CD4-positive, alpha-beta memory T cell (primary cell): ENCODE measurements at regions of chr10 and their contacts with region 1.

Region 1: GRCh38 chr10:119207367-119207668 is at the start of gene GRK5:
- DNase-seq: peak; percentile 98 to 99 (median 98)
- H3K4me3 ChIP-seq: peak within 1 kb of the TSS; percentile 37 to 84
- H3K4me3 Mint-ChIP-seq: peak within 1 kb of the TSS; percentile 94 to 99 (median 96)
- H3K27ac ChIP-seq: peak within 1 kb of the TSS; percentile 84
- H3K27ac Mint-ChIP-seq: peak within 1 kb of the TSS; percentile 96 to 99 (median 97)
- H3K4me1 ChIP-seq: peaks cover 52% of the 10 kb centered on the region
- H3K4me1 Mint-ChIP-seq: peaks cover 33 to 53% (median 43%) of the 10 kb centered on the region in 4 donors
- H3K27me3 ChIP-seq: no peaks in the 10 kb centered on the region
- H3K27me3 Mint-ChIP-seq: no peaks in the 10 kb centered on the region
- total RNA-seq, gene GRK5: 26.7 to 27.9 TPM

Region 2: DNA sequence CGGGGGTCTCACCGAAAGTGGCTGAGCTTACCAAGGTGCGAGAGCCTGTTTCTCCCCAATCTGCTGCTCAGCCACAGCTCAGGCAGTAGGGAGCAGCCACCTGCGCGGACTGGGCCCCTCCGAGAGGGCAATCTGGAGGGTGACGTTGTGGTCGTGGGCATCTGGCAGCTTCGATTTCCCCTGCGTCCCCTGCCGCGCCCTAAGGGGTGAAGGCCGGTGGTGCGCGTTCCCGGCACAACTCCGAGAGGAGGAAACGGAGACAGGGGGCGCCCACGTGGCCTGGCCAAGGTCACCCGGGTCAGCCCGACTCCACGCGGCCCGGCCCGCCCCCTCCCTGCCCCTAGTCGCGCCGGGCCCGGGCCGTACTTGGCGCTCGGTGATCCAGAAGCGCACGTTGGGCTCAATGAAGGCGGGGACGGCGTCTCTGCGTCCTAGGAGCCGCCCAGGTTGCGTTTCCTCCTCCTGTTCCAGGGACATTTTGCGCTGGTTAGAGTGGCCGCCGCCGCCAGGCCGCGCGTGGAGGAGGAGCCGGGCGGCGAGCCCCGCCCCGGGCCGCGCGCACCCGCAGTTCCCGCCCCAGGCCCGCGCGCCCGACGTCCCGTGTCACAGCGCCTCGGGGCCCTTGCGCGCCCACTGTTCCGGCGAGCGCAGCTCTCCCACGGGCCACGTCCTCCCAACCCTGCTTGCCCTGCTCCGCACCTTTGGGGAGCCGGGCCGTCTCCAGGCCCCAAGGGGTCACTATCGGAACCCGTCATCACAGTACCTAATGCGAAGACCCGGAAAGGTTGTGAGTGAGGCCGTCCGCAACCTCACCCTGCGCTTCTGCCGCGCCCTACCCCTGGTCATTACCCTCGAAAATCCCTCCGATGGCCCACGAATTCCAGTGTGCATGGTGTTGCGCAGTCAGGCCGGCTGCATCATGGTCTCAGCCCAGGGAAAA is 41.9 kb before region 1 on chr10 and contains the start of gene SFXN4:
- CTCF ChIA-PET with region 1: interaction called, 8 read pairs
- POLR2A ChIA-PET with region 1: interaction called, 16 read pairs
- intact Hi-C with region 1: loop called (anchors 5 kb)
- DNase-seq: peak; percentile 76 to 87 (median 85)
- H3K4me3 ChIP-seq: peak within 1 kb of the TSS; percentile 73 to 92
- H3K4me3 Mint-ChIP-seq: peak within 1 kb of the TSS; percentile 90 to 94 (median 92)
- H3K27ac ChIP-seq: peak within 1 kb of the TSS; percentile 65
- H3K27ac Mint-ChIP-seq: peak within 1 kb of the TSS; percentile 87 to 96 (median 95)
- H3K4me1 ChIP-seq: peaks cover 20% of the 10 kb centered on the region
- H3K4me1 Mint-ChIP-seq: peaks cover 9 to 43% (median 27%) of the 10 kb centered on the region in 4 donors
- H3K27me3 ChIP-seq: no peaks in the 10 kb centered on the region
- H3K27me3 Mint-ChIP-seq: no peaks in the 10 kb centered on the region
- total RNA-seq, gene SFXN4: 17.2 to 18.5 TPM

Region 3: GRCh38 chr10:119270762-119271366 is 63.5 kb after region 1 on chr10:
- CTCF ChIA-PET with region 1: interaction called, 38 read pairs
- POLR2A ChIA-PET with region 1: interaction called, 24 read pairs
- intact Hi-C with region 1: loop called (anchors 1 kb)
- DNase-seq: peak in 3 of 5 donors; percentile 43 to 63 (median 58)
- H3K4me3 ChIP-seq: no peak overlapping the region
- H3K4me3 Mint-ChIP-seq: peak overlapping the region; percentile 45 to 80 (median 66)
- H3K27ac ChIP-seq: peak overlapping the region; percentile 93
- H3K27ac Mint-ChIP-seq: peak overlapping the region; percentile 96 to 100 (median 99)
- H3K4me1 ChIP-seq: peaks cover 69% of the 10 kb centered on the region
- H3K4me1 Mint-ChIP-seq: peaks cover 28 to 84% (median 65%) of the 10 kb centered on the region in 4 donors
- H3K27me3 ChIP-seq: no peaks in the 10 kb centered on the region
- H3K27me3 Mint-ChIP-seq: no peaks in the 10 kb centered on the region

Region 4: DNA sequence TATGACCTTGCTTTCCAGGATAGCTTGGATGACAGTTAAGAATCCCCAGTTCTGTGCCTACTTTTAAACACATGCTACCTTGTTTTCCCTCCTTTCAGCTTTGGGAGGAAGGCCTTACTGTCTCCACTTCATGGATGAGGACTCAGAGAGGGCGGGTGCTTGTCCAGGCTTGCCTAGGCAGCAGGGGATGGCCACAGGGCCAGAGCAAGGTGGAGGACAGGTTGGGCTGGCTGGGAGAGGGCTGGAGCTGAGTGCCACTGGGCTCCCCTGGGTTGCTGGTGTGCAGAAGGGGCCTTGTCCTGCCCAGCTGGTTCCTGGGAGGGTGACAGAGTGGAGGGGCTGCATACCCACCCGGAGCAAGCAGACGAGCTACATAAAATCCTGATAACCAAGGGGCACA is 117.8 kb after region 1 on chr10:
- CTCF ChIA-PET with region 1: no interaction called
- POLR2A ChIA-PET with region 1: no interaction called
- intact Hi-C with region 1: no loop called
- DNase-seq: no peak
- H3K4me3 ChIP-seq: no peak overlapping the region
- H3K4me3 Mint-ChIP-seq: no peak overlapping the region
- H3K27ac ChIP-seq: no peak overlapping the region
- H3K27ac Mint-ChIP-seq: peak overlapping the region in 1 of 7 donors; percentile 40
- H3K4me1 ChIP-seq: no peaks in the 10 kb centered on the region
- H3K4me1 Mint-ChIP-seq: peaks cover 8 to 13% (median 10%) of the 10 kb centered on the region in 4 donors
- H3K27me3 ChIP-seq: no peaks in the 10 kb centered on the region
- H3K27me3 Mint-ChIP-seq: no peaks in the 10 kb centered on the region

Region 5: DNA sequence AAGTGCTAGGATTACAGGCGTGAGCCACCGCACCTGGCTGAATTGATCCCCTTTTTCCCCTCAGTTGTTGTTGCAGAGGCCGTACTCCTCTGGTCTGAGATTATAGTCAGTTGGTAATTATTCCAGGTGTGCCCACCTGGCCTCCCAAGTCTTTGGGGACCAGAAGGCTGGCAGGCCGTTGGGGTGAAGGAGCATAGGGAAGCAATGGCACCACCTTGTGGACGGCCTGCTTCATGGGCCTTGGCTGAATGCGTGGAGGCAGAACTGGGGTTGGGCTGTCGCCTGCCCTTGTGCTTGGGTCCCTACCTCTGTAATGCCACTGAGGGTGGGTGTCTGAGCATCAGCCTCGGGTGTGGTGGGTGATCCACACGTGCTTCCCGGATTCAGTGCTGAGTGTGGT is 209.5 kb after region 1 on chr10:
- CTCF ChIA-PET with region 1: interaction called, 52 read pairs
- POLR2A ChIA-PET with region 1: interaction called, 9 read pairs
- intact Hi-C with region 1: loop called (anchors 1 kb)
- DNase-seq: peak; percentile 54 to 65 (median 62)
- H3K4me3 ChIP-seq: no peak overlapping the region
- H3K4me3 Mint-ChIP-seq: no peak overlapping the region
- H3K27ac ChIP-seq: no peak overlapping the region
- H3K27ac Mint-ChIP-seq: peak overlapping the region in 1 of 7 donors; percentile 12
- H3K4me1 ChIP-seq: no peaks in the 10 kb centered on the region
- H3K4me1 Mint-ChIP-seq: peaks cover 0 to 2% (median under 1%) of the 10 kb centered on the region in 4 donors
- H3K27me3 ChIP-seq: no peaks in the 10 kb centered on the region
- H3K27me3 Mint-ChIP-seq: no peaks in the 10 kb centered on the region

Region 6: GRCh38 chr10:119489991-119490326 is 282.6 kb after region 1 on chr10:
- CTCF ChIA-PET with region 1: interaction called, 20 read pairs
- POLR2A ChIA-PET with region 1: interaction called, 10 read pairs
- intact Hi-C with region 1: loop called (anchors 1 kb)
- DNase-seq: no peak
- H3K4me3 ChIP-seq: peak overlapping the region in 1 of 2 donors; percentile 51
- H3K4me3 Mint-ChIP-seq: peak overlapping the region; percentile 18 to 92 (median 88)
- H3K27ac ChIP-seq: peak overlapping the region; percentile 68
- H3K27ac Mint-ChIP-seq: peak overlapping the region; percentile 82 to 97 (median 95)
- H3K4me1 ChIP-seq: peaks cover 45% of the 10 kb centered on the region
- H3K4me1 Mint-ChIP-seq: peaks cover 25 to 50% (median 33%) of the 10 kb centered on the region in 4 donors
- H3K27me3 ChIP-seq: no peaks in the 10 kb centered on the region
- H3K27me3 Mint-ChIP-seq: no peaks in the 10 kb centered on the region

Region 7: GRCh38 chr10:119650692-119651513 is 443.6 kb after region 1 on chr10 and contains the start of gene BAG3:
- CTCF ChIA-PET with region 1: no interaction called
- POLR2A ChIA-PET with region 1: interaction called, 6 read pairs
- intact Hi-C with region 1: loop called (anchors 2 kb)
- DNase-seq: peak; percentile 66 to 80 (median 68)
- H3K4me3 ChIP-seq: peak within 1 kb of the TSS; percentile 88 to 89
- H3K4me3 Mint-ChIP-seq: peak within 1 kb of the TSS; percentile 94 to 100 (median 96)
- H3K27ac ChIP-seq: peak within 1 kb of the TSS; percentile 87
- H3K27ac Mint-ChIP-seq: peak within 1 kb of the TSS; percentile 96 to 99 (median 96)
- H3K4me1 ChIP-seq: peaks cover 45% of the 10 kb centered on the region
- H3K4me1 Mint-ChIP-seq: peaks cover 36 to 45% (median 43%) of the 10 kb centered on the region in 4 donors
- H3K27me3 ChIP-seq: no peaks in the 10 kb centered on the region
- H3K27me3 Mint-ChIP-seq: peaks cover 0 to under 1% of the 10 kb centered on the region in 2 donors
- total RNA-seq, gene BAG3: 20.8 to 21.6 TPM

Region 8: GRCh38 chr10:119872860-119873681 is 665.8 kb after region 1 on chr10:
- CTCF ChIA-PET with region 1: no interaction called
- POLR2A ChIA-PET with region 1: interaction called, 9 read pairs
- intact Hi-C with region 1: loop called (anchors 10 kb)
- DNase-seq: peak; percentile 87 to 89 (median 88)
- H3K4me3 ChIP-seq: peak overlapping the region; percentile 76 to 90
- H3K4me3 Mint-ChIP-seq: peak overlapping the region; percentile 86 to 92 (median 89)
- H3K27ac ChIP-seq: peak overlapping the region; percentile 85
- H3K27ac Mint-ChIP-seq: peak overlapping the region; percentile 91 to 96 (median 94)
- H3K4me1 ChIP-seq: peaks cover 46% of the 10 kb centered on the region
- H3K4me1 Mint-ChIP-seq: peaks cover 26 to 46% (median 37%) of the 10 kb centered on the region in 4 donors
- H3K27me3 ChIP-seq: no peaks in the 10 kb centered on the region
- H3K27me3 Mint-ChIP-seq: no peaks in the 10 kb centered on the region